AG04449 (cell line): ENCODE measurements at regions of chrX and their contacts with region 1.

Region 1: DNA sequence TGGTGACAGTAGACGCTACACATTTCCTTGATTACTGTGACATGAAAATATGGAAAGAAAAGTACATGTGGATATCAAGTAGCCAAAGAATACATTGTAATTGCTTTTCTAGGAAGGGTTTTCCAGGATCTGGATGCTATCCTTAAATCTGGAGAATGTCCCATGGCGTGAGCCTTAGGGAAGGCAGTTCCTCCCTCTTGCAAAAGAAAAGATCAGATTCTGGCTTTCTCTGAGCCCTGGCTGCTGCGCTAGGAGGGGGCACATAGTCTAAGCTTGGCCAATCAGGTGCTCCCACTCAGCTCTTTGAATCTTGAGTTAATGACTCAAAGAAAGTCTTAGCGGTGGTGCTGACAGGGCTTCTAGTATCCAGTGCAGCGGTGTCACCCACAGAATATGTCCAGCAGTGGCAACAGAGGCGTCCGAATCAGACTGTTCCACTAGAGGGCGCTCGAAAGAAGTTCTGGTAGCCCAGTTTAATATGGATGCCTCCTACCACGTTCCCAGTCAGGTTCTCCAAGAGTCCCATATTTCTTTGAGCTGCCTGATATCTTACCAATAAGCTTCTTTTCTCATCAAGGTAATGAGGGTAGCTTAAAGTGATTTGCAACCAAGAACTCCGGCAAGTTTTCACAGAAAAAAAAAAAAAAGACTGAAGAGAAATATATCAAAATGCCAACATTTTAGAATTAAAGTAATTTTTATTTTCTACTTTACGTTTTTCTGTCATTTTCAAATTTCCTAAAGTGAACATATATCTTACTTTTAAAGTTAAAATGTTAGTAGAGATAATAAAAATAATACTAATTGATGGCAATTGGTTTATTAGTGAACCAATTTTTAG is 213.4 kb upstream of the S100G start:
- DNase-seq: no peak
- H3K4me3 ChIP-seq: no peak overlapping the region
- CTCF ChIP-seq: peak; percentile 62

Region 2: GRCh38 chrX:16416587-16416986 is 20.0 kb before region 1 on chrX:
- CTCF ChIA-PET with region 1: no interaction called
- POLR2A ChIA-PET with region 1: no interaction called
- DNase-seq: no peak
- H3K4me3 ChIP-seq: no peak overlapping the region
- CTCF ChIP-seq: no peak

Region 3: GRCh38 chrX:16664074-16664473 is 227.5 kb after region 1 on chrX:
- CTCF ChIA-PET with region 1: interaction called, 25 read pairs
- POLR2A ChIA-PET with region 1: no interaction called
- DNase-seq: no peak
- H3K4me3 ChIP-seq: no peak overlapping the region
- CTCF ChIP-seq: no peak

Region 4: DNA sequence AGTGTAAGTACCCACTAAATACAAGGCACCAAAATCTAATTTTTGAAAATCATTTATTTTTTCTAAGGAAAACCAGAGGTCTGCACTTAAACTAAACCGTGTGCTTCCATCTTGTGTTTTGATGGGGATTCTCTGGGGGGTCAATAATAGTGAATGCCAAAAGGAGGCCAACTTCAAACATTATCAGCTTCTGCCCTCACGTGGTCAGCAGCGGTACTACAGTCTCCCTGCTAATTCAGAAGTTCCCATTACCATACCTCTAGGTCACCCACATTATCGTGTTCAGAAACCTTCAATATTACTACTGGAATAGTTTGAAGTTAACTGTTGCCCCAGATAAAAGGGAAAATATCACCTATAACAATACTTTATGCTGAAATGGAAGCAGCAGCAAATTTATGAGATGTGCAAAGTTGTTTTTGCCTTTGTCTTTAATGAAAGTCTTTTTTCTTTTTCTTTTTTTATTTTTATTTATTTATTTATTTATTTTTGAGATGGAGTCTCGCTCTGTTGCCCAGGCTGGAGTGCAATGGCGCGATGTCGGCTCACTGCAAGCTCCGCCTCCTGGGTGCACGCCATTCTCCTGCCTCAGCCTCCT is 258.6 kb after region 1 on chrX:
- CTCF ChIA-PET with region 1: interaction called, 11 read pairs
- POLR2A ChIA-PET with region 1: no interaction called
- DNase-seq: no peak
- H3K4me3 ChIP-seq: no peak overlapping the region
- CTCF ChIP-seq: peak; percentile 71

Region 5: DNA sequence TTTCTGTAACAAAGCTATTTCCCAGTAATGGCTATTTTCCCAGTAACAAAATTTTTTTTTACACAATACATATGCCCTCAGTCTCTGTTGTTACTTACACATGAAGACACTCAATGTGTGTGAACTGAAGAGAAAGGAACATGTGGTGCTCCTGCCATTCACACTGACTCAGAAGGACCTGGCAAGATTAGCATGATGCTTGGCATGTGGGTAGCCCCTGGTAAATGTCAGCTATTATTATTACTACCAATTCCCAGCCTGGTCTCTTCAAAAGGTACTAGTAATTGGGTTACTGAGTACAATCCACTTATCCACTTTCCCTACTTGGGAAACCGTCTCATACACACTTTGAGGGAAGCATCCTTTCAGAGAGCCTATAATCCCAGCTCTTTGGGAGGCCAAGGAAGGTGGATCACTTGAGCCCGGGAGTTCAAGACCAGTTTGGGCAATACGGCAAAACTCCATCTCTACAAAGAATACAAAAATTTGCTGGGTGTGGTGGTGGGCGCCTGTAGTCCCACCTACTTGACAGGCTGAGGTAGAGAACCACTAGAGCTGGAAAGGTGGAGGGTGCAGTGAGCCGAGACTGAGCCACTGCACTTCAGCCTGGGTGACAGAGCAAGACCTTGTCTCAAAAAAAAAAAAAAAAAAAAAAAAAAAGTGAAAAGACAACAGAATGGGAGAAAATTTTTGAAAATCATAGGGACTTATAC is 419.0 kb after region 1 on chrX:
- CTCF ChIA-PET with region 1: no interaction called
- POLR2A ChIA-PET with region 1: no interaction called
- DNase-seq: no peak
- H3K4me3 ChIP-seq: no peak overlapping the region
- CTCF ChIP-seq: no peak